ENCODE measurements at regions of chr10 and their contacts with region 1.

Region 1: DNA sequence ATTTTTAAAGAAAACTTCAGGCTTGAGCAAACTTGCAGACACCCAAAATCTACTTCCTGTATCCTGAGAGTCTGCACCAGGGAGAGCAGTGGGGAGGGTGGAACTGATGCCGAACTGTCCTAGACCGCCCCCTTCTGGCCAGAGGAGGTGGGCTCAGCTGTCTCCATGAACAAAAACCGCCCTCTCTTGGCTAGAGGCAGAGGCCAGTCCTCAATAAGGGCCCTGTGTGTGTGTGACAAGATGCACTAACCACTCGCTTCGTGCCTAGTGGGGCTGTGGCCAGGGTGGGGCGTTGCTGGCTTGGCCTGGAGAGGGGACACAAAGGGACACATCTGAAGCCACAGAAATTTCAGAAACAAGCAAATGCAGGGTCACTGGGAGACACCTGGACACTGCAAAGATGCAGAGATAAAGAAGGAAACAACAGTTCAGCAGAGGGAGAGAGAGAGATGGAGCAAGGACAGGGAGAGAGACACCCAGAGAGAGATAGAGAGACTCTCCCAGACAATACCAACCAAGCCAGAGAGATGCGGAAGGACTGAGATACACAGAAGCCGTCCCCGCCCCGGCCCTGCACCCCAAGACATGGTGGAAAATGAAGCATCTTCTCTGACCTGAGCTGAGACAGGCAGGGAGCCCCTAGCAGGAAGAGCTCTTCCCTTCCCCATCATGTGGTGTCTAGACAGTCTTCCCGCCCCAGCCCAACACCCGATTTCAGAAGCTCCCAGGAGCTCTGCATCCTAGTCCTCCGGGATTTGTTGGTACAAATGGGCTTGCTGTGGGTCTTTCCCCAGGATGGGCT is 22.7 kb upstream of the FXYD4 start:
- DNase-seq: peak; percentile 92
- H3K4me3 ChIP-seq: no peak overlapping the region
- H3K27ac ChIP-seq: no peak overlapping the region
- H3K4me1 ChIP-seq: no peaks in the 10 kb centered on the region
- H3K27me3 ChIP-seq: no peaks in the 10 kb centered on the region
- CTCF ChIP-seq: peak; percentile 54 to 85 (median 68)
- POLR2A ChIP-seq: no peak

Region 2: GRCh38 chr10:43292755-43293676 is 55.7 kb before region 1 on chr10:
- intact Hi-C with region 1: loop called (anchors 10 kb)
- DNase-seq: peak; percentile 63
- H3K4me3 ChIP-seq: no peak overlapping the region
- H3K27ac ChIP-seq: no peak overlapping the region
- H3K4me1 ChIP-seq: no peaks in the 10 kb centered on the region
- H3K27me3 ChIP-seq: no peaks in the 10 kb centered on the region
- CTCF ChIP-seq: peak; percentile 25 to 65 (median 58)
- POLR2A ChIP-seq: no peak